GM13977 (cell line): ENCODE measurements at regions of chr17 and their contacts with region 1.

Region 1: DNA sequence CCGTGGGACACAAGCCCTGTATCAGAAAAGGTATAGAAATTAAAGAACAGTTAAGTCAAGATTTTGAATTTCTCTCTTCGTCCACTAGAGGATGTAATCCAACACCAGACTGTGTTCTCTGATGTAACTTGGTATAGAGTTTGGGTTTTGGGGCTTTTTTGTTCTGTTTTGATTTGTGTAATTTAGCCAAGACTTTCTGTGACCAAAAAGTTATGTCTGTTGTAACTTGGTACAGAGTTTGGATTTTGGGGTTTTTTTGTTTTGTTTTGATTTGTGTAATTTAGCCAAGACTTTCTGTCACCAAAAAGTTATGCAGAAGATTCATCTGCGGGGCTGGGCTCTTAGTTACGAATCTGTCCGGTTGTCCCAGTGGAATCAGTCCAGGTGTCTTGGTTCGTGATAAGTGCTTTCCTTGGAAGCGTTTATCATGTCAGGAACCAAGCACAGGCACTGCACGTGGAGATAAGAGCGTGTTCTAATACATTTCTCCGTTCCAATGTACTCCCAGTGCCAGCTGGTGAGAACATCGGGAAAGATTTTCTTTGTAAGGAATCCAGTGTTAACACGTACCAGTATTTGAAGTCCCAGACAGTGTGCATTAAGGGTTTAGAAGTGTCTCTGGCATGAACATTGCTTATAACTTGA is 44.1 kb upstream of the SEC14L1 start:
- DNase-seq: peak; percentile 52
- CTCF ChIP-seq: peak; percentile 55

Region 2: GRCh38 chr17:76997981-76998531 is 98.6 kb before region 1 on chr17:
- in situ Hi-C with region 1: no loop called
- DNase-seq: peak; percentile 75
- CTCF ChIP-seq: no peak

Region 3: DNA sequence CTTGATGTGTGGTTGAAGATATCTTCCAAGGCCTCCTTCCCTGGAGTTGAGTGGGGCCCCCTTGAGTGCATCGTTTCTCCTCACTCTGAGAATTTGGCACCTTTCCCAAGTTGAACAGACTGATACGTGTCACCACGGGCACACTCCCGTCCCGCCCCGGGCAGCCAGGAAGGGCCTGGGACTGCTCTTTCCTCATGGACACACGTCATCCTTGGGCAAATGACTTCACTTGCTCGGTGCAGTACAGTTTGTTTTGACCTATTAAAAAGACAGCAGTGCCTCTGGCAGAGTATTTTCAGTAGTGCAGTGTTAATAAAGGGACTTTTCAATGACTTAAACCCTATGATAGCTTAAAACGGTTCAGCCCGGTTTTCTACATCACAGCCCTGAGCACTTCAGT is 104.0 kb after region 1 on chr17:
- in situ Hi-C with region 1: no loop called
- DNase-seq: no peak
- CTCF ChIP-seq: no peak

Region 4: GRCh38 chr17:77247048-77247541 is 150.4 kb after region 1 on chr17:
- in situ Hi-C with region 1: loop called (anchors 10 kb)
- DNase-seq: peak; percentile 93
- CTCF ChIP-seq: peak; percentile 94